ENCODE measurements at regions of chr2 and their contacts with region 1.

Region 1: GRCh38 chr2:226478109-226478809 is 321.4 kb downstream of the IRS1 start:
- DNase-seq: peak in 1 of 2 donors; percentile 13
- ATAC-seq: peak; percentile 79 to 100 (median 85)
- H3K4me3 ChIP-seq: no peak overlapping the region
- H3K27ac ChIP-seq: peak overlapping the region in 8 of 10 donors; percentile 11 to 64 (median 41)
- H3K4me1 ChIP-seq: peaks cover 0 to 14% (median 7%) of the 10 kb centered on the region in 9 donors
- H3K27me3 ChIP-seq: no peaks in the 10 kb centered on the region
- CTCF ChIP-seq: no peak

Region 2: GRCh38 chr2:226466561-226466960 is 11.7 kb before region 1 on chr2:
- intact Hi-C with region 1: no loop called
- DNase-seq: no peak
- ATAC-seq: no peak
- H3K4me3 ChIP-seq: no peak overlapping the region
- H3K27ac ChIP-seq: no peak overlapping the region
- H3K4me1 ChIP-seq: peaks cover 0 to 9% (median 3%) of the 10 kb centered on the region in 9 donors
- H3K27me3 ChIP-seq: no peaks in the 10 kb centered on the region
- CTCF ChIP-seq: no peak

Region 3: DNA sequence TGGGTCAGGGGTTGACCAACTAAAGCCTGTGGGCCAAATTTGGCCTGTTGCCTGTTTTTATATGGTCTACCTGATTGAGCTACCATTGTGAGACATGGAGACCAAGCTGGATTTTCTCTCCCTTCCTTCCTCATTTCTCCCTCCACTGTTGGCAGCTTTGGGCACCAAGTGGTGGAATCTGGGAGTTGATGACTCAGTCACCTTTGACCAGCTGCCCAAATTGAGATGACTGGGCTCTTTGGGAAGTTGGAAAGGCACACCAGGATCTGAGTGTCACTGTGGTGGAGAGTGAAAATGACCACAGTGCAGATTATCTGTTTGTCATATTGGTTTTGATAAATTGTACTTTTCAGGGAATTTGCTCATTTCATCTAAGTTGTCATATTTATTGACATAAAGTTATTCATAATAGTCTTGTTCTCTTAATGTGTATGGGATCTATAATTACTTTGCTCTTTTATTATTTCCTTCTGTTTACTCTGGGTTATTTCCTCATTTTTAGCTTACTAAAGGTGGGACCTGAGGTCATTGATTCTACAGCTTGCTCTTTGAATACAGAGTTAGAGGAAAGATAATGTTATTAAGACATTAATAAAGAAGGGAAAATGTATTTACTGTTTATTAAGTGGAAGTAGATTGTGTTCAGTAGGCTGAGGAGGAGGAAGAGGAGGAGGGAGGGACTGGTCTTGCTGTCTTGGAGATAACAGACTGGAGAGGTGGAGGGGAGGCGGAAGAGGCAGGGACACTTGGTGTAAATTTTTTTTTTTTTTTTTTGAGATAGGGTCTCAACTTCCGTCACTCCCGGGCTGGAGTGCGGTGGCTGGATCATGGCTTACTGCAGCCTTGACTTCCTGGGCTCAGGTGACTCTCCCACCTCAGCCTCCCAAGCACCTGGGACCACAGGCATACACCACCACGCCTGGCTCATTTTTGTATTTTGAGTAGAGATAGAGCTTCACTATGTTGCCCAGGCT is 1025.5 kb after region 1 on chr2:
- intact Hi-C with region 1: loop called in 1 of 10 experiments (anchors 10 kb)
- DNase-seq: peak in 1 of 2 donors; percentile 12
- ATAC-seq: peak in 5 of 8 donors; percentile 49 to 93 (median 76)
- H3K4me3 ChIP-seq: no peak overlapping the region
- H3K27ac ChIP-seq: peak overlapping the region in 2 of 10 donors; percentile 11 to 54
- H3K4me1 ChIP-seq: peaks cover 0 to 88% (median 56%) of the 10 kb centered on the region in 9 donors
- H3K27me3 ChIP-seq: no peaks in the 10 kb centered on the region
- CTCF ChIP-seq: no peak